ENCODE measurements at regions of chr22 and their contacts with region 1.

Region 1: GRCh38 chr22:17077255-17077654 is 7.5 kb upstream of the IL17RA start:
- DNase-seq: no peak
- H3K4me3 ChIP-seq: no peak overlapping the region
- H3K27ac ChIP-seq: no peak overlapping the region
- H3K4me1 ChIP-seq: peaks cover 3% of the 10 kb centered on the region
- H3K27me3 ChIP-seq: no peaks in the 10 kb centered on the region
- CTCF ChIP-seq: no peak
- POLR2A ChIP-seq: no peak

Region 2: GRCh38 chr22:17057959-17058814 is 19.1 kb before region 1 on chr22:
- CTCF ChIA-PET with region 1: interaction called, 40 read pairs
- POLR2A ChIA-PET with region 1: no interaction called
- dilution Hi-C with region 1: no loop called
- intact Hi-C with region 1: no loop called
- DNase-seq: peak; percentile 75
- H3K4me3 ChIP-seq: no peak overlapping the region
- H3K27ac ChIP-seq: no peak overlapping the region
- H3K4me1 ChIP-seq: peaks cover 6% of the 10 kb centered on the region
- H3K27me3 ChIP-seq: peaks cover 0 to 9% of the 10 kb centered on the region in 2 experiments
- CTCF ChIP-seq: peak; percentile 90 to 92
- POLR2A ChIP-seq: no peak

Region 3: GRCh38 chr22:17063411-17064106 is 13.7 kb before region 1 on chr22:
- CTCF ChIA-PET with region 1: interaction called, 40 read pairs
- POLR2A ChIA-PET with region 1: no interaction called
- dilution Hi-C with region 1: no loop called
- intact Hi-C with region 1: no loop called
- DNase-seq: peak; percentile 95
- H3K4me3 ChIP-seq: peak overlapping the region in 1 of 3 experiments; percentile 19
- H3K27ac ChIP-seq: peak overlapping the region; percentile 92
- H3K4me1 ChIP-seq: peaks cover 33% of the 10 kb centered on the region
- H3K27me3 ChIP-seq: peaks cover 0 to 8% of the 10 kb centered on the region in 2 experiments
- CTCF ChIP-seq: no peak
- POLR2A ChIP-seq: peak; percentile 34

Region 4: GRCh38 chr22:17095538-17095937 is 18.3 kb after region 1 on chr22:
- CTCF ChIA-PET with region 1: interaction called, 20 read pairs
- POLR2A ChIA-PET with region 1: no interaction called
- dilution Hi-C with region 1: no loop called
- intact Hi-C with region 1: loop called (anchors 1 kb)
- DNase-seq: no peak
- H3K4me3 ChIP-seq: no peak overlapping the region
- H3K27ac ChIP-seq: no peak overlapping the region
- H3K4me1 ChIP-seq: no peaks in the 10 kb centered on the region
- H3K27me3 ChIP-seq: no peaks in the 10 kb centered on the region
- CTCF ChIP-seq: peak; percentile 30 to 37
- POLR2A ChIP-seq: no peak

Region 5: DNA sequence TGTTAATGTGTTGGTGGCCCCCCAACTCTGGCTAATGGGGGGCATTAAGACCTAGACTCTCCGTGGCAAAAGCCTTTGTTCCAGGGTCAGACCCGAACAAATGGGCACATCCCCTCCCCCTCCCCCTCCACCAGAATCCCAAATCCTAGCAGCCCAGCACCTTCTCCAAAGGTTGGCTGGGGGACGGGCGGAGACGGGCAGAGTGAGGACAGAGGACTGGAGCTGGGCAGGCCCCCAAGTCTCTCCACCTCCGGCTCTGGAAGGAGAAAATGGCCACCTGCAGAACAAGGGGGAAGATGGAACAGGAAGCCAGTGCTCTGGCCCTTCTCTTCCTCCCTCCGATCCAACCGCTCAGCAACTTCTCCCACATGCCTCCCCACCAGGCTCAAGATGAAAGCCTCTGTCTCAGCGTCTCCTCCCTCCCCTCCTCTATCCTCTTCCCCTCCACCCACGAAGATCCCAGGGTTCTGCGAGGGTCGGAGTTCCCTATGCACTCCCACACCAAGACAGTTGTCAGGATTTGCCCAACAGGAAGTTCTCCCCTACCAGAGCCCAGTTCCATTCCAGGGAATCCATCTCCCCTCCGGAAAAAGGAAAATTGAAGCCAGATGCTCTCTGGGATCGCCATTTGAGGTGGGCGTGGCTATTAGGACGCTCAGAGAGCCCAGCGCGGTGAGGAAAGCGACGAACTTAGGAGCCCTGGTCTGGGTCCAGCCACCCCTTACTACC is 121.9 kb after region 1 on chr22:
- CTCF ChIA-PET with region 1: interaction called, 15 read pairs
- POLR2A ChIA-PET with region 1: no interaction called
- dilution Hi-C with region 1: no loop called
- intact Hi-C with region 1: no loop called
- DNase-seq: no peak
- H3K4me3 ChIP-seq: peak overlapping the region; percentile 2 to 68 (median 48)
- H3K27ac ChIP-seq: peak overlapping the region; percentile 55
- H3K4me1 ChIP-seq: peaks cover 13% of the 10 kb centered on the region
- H3K27me3 ChIP-seq: peaks cover 2 to 3% of the 10 kb centered on the region in 2 experiments
- CTCF ChIP-seq: no peak
- POLR2A ChIP-seq: no peak

Region 6: DNA sequence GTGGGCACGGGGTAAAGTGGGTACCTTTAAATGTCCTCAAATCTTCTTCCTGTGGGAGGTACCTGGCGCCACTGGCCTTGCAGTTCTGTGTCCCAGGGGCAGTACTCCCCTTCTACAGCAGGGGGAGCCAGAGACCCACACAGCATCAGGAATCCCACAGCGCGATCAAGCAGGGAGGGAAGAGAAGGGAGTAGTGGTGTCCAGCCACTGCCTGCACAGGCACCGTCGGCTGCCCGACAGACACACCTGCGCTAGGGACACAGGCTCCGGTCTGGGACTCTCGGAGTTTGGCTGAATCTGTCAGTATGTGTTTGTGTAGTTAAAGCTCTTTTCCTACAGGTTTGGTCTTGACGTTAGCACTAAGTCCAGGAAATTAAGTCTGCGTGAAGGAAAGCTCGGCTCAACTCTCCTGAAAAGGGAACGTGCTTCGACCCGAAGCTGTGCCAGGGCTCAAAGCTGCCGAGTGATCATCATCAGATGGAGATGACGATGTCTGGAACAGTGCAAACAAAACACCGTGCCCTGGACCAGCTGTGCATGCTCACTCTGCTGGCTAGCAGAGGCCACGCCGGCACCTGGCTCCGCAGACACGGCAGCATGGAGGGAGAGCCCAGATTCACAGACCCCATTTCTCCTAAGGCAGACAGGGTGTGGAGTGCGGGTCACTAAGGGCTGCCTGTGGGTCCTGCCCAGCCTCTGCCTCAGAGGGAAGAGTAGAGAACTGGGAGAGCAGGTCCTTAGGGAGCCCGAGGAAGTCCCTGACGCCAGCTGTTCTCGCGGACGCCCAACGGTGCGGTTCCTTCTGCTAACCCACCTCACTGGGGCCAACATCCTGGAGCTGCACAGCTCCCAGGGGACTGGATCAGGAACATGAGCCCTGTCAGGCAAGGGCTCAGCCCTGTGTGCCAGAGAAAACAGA is 753.0 kb after region 1 on chr22:
- CTCF ChIA-PET with region 1: no interaction called
- POLR2A ChIA-PET with region 1: no interaction called
- dilution Hi-C with region 1: no loop called
- intact Hi-C with region 1: loop called (anchors 2 kb)
- DNase-seq: peak; percentile 82
- H3K4me3 ChIP-seq: no peak overlapping the region
- H3K27ac ChIP-seq: no peak overlapping the region
- H3K4me1 ChIP-seq: no peaks in the 10 kb centered on the region
- H3K27me3 ChIP-seq: no peaks in the 10 kb centered on the region
- CTCF ChIP-seq: peak; percentile 97
- POLR2A ChIP-seq: no peak

Measured in endothelial cell of umbilical vein (primary cell).